Mammary epithelial cell (primary cell): ENCODE measurements at regions of chr15 and their contacts with region 1.

Region 1: DNA sequence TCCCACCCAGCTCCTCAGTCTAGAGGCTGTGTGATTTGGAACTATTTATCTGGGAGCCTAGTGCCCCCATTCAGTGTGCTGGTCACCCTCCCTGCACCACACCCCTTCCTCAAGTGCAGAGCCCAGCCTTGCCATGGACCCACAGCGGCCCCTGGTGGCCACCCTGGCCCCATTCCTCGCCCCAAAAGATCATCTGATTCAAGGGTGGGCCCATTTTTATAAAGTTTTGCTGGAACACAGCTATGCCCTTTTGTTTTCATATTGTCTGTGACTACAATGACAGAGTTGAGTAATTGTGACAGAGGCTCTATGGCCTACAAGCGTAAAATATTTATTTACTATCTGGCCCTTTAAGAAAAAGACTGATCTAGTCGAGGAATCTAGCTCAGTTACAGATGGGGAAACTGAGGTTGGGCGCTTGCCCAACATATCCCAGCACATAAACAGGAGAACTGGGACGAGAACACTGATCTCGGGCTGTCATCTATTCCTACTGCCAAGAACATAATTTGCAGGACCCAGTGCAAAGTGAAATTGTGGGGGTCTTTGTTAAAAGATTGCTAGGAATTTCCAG is 1.8 kb downstream of the FES start:
- DNase-seq: no peak
- H3K4me3 ChIP-seq: no peak overlapping the region
- H3K27ac ChIP-seq: no peak overlapping the region
- H3K4me1 ChIP-seq: no peaks in the 10 kb centered on the region
- H3K27me3 ChIP-seq: no peaks in the 10 kb centered on the region
- CTCF ChIP-seq: peak; percentile 93 to 99

Region 2: DNA sequence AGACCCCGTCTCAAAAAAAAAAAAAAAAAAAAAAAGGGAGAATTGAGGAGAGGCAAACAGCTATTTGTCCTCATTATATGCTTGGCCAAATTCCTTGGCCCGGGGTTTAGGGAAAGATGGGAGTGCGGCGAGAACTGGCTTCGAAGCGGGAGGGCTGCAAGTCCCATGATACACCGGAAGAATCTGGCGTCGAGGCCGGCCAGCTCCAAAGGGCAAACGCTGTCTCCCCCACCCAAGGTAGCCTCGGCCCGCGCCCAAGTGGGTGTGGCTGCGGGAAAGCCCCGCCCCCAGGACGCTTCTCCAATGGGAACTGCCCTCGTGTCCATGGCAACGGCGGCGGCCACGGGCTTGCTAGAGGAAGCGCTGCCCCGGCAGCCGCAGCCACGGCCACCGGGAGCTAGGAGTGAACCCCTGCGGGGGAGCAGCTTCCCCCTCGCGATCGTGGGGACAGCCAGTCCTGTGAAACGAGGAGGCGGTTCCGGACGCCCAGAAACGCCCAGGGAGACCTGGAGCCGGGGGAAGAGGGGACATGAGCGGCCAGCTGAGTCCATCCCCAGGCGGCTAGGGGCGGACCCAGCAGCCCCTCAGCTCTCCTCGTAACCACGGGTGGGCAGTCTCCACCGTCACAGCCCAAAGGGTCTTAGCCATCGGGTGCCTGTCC is 636.8 kb before region 1 on chr15 and contains the start of gene TTLL13:
- CTCF ChIA-PET with region 1: no interaction called
- dilution Hi-C with region 1: no loop called
- in situ Hi-C with region 1: no loop called
- intact Hi-C with region 1: no loop called
- DNase-seq: peak; percentile 68
- H3K4me3 ChIP-seq: peak within 1 kb of the TSS; percentile 58 to 79 (median 65)
- H3K27ac ChIP-seq: peak within 1 kb of the TSS; percentile 12
- H3K4me1 ChIP-seq: peaks cover 6% of the 10 kb centered on the region
- H3K27me3 ChIP-seq: no peaks in the 10 kb centered on the region
- CTCF ChIP-seq: no peak
- total RNA-seq, gene TTLL13: 0.17 to 0.21 TPM

Region 3: GRCh38 chr15:90497912-90498311 is 388.2 kb before region 1 on chr15:
- CTCF ChIA-PET with region 1: no interaction called
- dilution Hi-C with region 1: no loop called
- in situ Hi-C with region 1: no loop called
- intact Hi-C with region 1: loop called (anchors 2 kb)
- DNase-seq: no peak
- H3K4me3 ChIP-seq: no peak overlapping the region
- H3K27ac ChIP-seq: no peak overlapping the region
- H3K4me1 ChIP-seq: no peaks in the 10 kb centered on the region
- H3K27me3 ChIP-seq: no peaks in the 10 kb centered on the region
- CTCF ChIP-seq: no peak

Region 4: DNA sequence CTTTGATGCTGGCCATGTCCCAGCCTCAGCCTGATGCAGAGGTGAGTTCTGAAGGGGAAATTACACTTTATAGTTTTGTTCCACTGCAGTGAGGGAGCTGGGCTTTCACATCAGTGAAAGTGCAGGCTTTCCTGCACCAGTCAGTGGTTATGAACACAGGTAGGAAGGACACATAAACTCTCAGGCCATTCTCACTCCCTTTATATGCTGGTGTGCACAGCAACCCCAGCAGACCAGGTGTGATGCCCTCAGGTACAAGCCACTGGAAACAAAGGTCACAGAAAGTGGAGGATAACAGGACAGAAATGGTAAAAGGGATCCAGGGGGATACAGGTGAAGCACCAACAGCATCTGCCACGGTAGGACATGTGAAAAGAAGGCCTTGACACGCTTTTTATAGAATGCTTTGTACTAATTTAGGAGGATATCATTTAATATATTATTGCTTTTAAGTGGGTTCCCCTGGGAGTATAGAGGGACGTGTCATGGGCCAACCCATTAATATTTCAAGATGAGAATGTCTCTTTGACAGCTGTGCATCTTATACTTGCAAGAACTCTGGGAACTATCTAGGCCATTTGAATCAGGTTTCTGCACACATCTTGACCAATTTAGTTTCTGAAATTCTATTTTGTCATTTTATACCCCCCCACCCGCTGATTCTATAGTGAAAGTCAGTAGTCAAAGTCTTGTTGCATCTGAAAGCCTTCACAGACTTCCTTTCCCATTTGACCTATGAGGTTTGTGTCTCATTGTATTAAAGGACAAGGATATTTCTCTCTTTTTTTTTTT is 193.9 kb before region 1 on chr15:
- CTCF ChIA-PET with region 1: no interaction called
- dilution Hi-C with region 1: no loop called
- in situ Hi-C with region 1: no loop called
- intact Hi-C with region 1: loop called (anchors 2 kb)
- DNase-seq: no peak
- H3K4me3 ChIP-seq: no peak overlapping the region
- H3K27ac ChIP-seq: no peak overlapping the region
- H3K4me1 ChIP-seq: no peaks in the 10 kb centered on the region
- H3K27me3 ChIP-seq: no peaks in the 10 kb centered on the region
- CTCF ChIP-seq: no peak

Region 5: GRCh38 chr15:90710436-90711027 is 175.6 kb before region 1 on chr15:
- CTCF ChIA-PET with region 1: no interaction called
- dilution Hi-C with region 1: no loop called
- in situ Hi-C with region 1: loop called in 1 of 2 experiments (anchors 5 kb)
- intact Hi-C with region 1: no loop called
- DNase-seq: no peak
- H3K4me3 ChIP-seq: no peak overlapping the region
- H3K27ac ChIP-seq: no peak overlapping the region
- H3K4me1 ChIP-seq: no peaks in the 10 kb centered on the region
- H3K27me3 ChIP-seq: no peaks in the 10 kb centered on the region
- CTCF ChIP-seq: no peak